ENCODE measurements at regions of chr11 and their contacts with region 1.

Region 1: DNA sequence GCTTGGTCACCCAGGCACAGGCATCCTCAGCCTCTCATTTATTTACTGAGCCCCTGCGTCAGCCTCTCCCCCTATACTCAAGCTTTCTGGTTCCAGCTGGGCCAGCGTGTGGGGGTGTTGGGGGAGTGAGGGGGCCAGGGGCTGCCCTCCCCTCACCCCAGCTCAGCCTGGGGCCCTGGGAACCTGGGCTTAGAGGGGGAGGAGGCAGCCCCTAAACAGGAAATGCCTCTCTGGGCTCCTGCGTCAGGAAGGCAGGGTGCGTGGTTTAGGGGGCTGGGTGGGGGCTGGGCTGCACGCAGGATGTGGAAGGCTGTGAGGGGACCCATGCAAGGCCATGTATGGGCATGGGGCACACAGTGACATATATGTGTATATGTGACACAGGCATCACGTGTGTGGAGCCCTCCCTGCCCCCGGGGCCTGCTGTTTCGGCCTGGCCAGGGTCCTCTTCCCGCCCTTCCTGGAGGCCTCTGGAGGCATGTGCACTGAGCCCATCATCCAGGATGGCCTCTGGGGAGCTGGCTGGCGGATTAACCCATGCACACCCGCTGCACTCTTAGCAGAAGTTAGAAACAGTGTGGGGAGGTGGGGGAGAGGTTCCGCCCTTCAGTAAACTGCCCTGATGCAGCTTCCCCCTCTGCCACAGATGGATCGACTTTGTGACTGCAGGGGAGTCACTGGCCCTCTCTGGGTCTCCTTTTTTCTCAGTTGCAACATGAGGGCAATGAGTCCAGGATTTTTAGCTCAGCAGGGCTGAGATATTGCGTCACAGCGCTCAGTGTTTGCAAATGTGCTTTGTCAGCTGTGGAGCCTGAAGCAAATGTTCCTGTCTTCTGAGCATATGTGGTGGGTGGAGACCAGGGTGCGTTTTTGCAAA is 1.1 kb upstream of the CD248 start:
- DNase-seq: peak; percentile 71
- H3K4me3 Mint-ChIP-seq: peak overlapping the region; percentile 53
- H3K27ac Mint-ChIP-seq: peak overlapping the region; percentile 93
- H3K4me1 Mint-ChIP-seq: peaks cover 66% of the 10 kb centered on the region
- H3K27me3 Mint-ChIP-seq: no peaks in the 10 kb centered on the region

Region 2: GRCh38 chr11:66264924-66265331 is 53.0 kb before region 1 on chr11:
- CTCF ChIA-PET with region 1: no interaction called
- intact Hi-C with region 1: no loop called
- DNase-seq: peak; percentile 52
- H3K4me3 Mint-ChIP-seq: no peak overlapping the region
- H3K27ac Mint-ChIP-seq: no peak overlapping the region
- H3K4me1 Mint-ChIP-seq: peaks cover 21% of the 10 kb centered on the region
- H3K27me3 Mint-ChIP-seq: no peaks in the 10 kb centered on the region

Region 3: DNA sequence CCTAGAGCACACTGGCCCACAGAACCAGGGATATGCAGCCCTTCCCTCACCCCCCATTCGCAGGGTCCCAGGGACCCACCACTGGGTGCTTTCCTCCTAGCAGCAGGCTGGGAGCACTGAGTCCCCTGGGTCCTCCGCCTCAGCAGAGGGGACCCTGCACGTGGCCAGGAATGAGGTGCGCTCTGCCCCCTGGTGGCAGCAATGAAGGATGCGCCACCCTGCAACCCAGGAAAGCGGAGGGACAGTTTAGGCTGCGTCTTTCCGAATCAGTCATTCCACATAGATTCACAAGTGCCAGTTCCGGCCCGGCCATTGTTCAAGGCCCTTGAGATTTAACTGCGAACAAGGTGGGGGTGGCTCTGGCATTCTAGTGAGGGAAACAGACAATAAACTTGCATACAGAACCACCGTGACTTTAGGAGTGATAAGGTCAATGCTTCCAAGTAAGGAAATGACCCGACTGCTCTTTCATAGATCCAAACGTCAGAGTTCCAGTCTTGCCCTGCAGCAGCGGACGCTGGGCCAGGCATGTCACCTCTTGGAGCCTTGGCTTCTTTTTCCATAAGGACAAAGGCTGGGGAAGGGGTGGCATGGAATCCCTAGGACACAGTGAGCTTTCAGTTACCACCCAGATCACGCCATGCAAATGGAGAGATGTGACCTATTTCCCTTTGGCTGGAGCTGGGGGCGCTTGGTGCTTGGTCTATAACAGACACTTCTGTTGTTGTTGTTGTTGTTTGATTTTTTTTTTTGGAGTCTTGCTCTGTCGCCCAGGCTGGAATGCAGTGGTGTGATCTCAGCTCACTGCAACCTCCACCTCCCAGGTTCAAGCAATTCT is 10.6 kb after region 1 on chr11:
- CTCF ChIA-PET with region 1: interaction called, 23 read pairs
- intact Hi-C with region 1: loop called (anchors 1 kb)
- DNase-seq: peak; percentile 90
- H3K4me3 Mint-ChIP-seq: peak overlapping the region; percentile 34
- H3K27ac Mint-ChIP-seq: peak overlapping the region; percentile 74
- H3K4me1 Mint-ChIP-seq: peaks cover 38% of the 10 kb centered on the region
- H3K27me3 Mint-ChIP-seq: no peaks in the 10 kb centered on the region

Region 4: GRCh38 chr11:66659763-66660162 is 341.8 kb after region 1 on chr11:
- CTCF ChIA-PET with region 1: no interaction called
- intact Hi-C with region 1: no loop called
- DNase-seq: no peak
- H3K4me3 Mint-ChIP-seq: no peak overlapping the region
- H3K27ac Mint-ChIP-seq: peak overlapping the region; percentile 3
- H3K4me1 Mint-ChIP-seq: peaks cover 11% of the 10 kb centered on the region
- H3K27me3 Mint-ChIP-seq: no peaks in the 10 kb centered on the region